ENCODE measurements at regions of chr3 and their contacts with region 1.

Region 1: DNA sequence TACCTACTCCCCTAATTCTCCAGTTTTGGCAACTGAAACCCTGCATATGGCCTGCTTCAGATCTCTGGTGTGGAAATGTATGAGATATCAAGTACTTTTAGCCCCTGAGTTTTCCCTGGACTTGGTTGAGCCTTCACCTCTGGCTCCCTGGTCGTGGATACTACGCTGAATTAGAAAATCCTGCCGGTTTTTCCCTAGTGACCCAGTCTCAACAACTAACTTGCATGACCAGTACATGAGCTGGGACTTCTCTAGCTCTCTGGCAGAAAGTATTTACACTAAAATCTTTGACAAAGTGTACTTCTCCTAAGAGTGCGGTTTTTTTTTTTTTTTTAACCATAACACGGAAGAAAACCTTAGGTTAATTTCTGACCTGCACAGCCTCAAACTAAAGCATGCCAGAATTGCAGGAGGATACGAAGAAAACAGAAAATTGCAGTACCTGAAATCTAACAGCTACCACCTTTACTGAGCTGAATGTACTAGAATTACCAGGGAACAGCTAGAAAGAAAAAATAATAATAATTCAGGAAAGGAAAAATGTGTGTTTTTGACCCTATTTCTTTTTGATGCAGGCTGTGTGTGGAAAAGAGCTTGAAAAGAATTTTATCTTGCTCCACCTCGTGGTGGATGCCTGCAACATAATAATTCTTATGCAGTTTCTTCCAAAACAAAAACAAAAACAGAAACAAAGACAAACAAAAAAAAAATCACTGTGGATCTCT is 165.6 kb downstream of the GMNC start:
- DNase-seq: peak in 2 of 4 donors; percentile 12 to 23
- ATAC-seq: no peak
- H3K4me3 ChIP-seq: no peak overlapping the region
- H3K27ac ChIP-seq: no peak overlapping the region
- H3K4me1 ChIP-seq: peaks cover 23% of the 10 kb centered on the region
- H3K27me3 ChIP-seq: no peaks in the 10 kb centered on the region
- CTCF ChIP-seq: peak; percentile 26 to 66 (median 56)
- POLR2A ChIP-seq: no peak

Region 2: GRCh38 chr3:190339130-190339529 is 357.8 kb before region 1 on chr3:
- intact Hi-C with region 1: no loop called
- DNase-seq: no peak
- ATAC-seq: peak; percentile 30
- H3K4me3 ChIP-seq: no peak overlapping the region
- H3K27ac ChIP-seq: no peak overlapping the region
- H3K4me1 ChIP-seq: no peaks in the 10 kb centered on the region
- H3K27me3 ChIP-seq: no peaks in the 10 kb centered on the region
- CTCF ChIP-seq: no peak
- POLR2A ChIP-seq: no peak

Region 3: GRCh38 chr3:191051037-191051436 is 354.1 kb after region 1 on chr3:
- intact Hi-C with region 1: loop called (anchors 5 kb)
- DNase-seq: no peak
- ATAC-seq: peak; percentile 47
- H3K4me3 ChIP-seq: no peak overlapping the region
- H3K27ac ChIP-seq: no peak overlapping the region
- H3K4me1 ChIP-seq: no peaks in the 10 kb centered on the region
- H3K27me3 ChIP-seq: no peaks in the 10 kb centered on the region
- CTCF ChIP-seq: peak in 6 of 7 experiments; percentile 29 to 67 (median 57)
- POLR2A ChIP-seq: no peak